H1 (cell line): ENCODE measurements at regions of chr2 and their contacts with region 1.

Region 1: DNA sequence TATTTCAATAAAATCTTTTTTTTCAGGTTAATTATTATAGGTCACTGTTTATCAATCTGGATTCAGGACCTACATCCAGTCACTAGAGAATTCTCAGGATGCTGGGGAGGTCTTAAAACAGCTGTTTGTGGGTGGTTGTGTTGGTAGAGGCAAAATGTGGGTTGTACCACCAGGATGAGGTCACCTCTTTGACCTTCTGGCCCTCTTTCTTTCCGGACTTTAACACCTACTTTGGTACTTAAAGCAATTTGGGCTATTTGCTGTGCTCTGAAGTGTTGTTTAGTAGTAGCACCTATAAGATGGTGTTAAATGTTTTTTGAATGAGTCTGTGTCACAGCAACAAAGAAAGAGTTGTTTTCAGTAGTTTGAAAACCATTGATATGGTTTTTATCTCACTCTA is 14.6 kb downstream of the EML4 start:
- DNase-seq: no peak
- H3K4me3 ChIP-seq: no peak overlapping the region
- H3K27ac ChIP-seq: no peak overlapping the region
- H3K4me1 ChIP-seq: peaks cover 0 to 3% (median 0%) of the 10 kb centered on the region in 4 experiments; a peak in 1 of 7 replicates
- H3K27me3 ChIP-seq: no peaks in the 10 kb centered on the region
- CTCF ChIP-seq: no peak
- EP300 ChIP-seq: no peak
- POLR2A ChIP-seq: no peak
- RAD21 ChIP-seq: no peak

Region 2: GRCh38 chr2:42196403-42197267 is 12.9 kb after region 1 on chr2:
- CTCF ChIA-PET with region 1: interaction called, 23 read pairs
- POLR2A ChIA-PET with region 1: interaction called, 7 read pairs
- DNase-seq: peak in 1 of 2 experiments; percentile 9
- H3K4me3 ChIP-seq: no peak overlapping the region
- H3K27ac ChIP-seq: no peak overlapping the region
- H3K4me1 ChIP-seq: peaks cover 0 to 7% (median 2%) of the 10 kb centered on the region in 4 experiments; a peak in 2 of 7 replicates
- H3K27me3 ChIP-seq: no peaks in the 10 kb centered on the region
- CTCF ChIP-seq: peak in 2 of 3 experiments; percentile 68 to 97; a peak in 3 of 4 replicates
- EP300 ChIP-seq: no peak
- POLR2A ChIP-seq: no peak
- RAD21 ChIP-seq: peak; percentile 75 to 77